Naive thymus-derived CD4-positive, alpha-beta T cell (primary cell): ENCODE measurements at regions of chr16 and their contacts with region 1.

Region 1: DNA sequence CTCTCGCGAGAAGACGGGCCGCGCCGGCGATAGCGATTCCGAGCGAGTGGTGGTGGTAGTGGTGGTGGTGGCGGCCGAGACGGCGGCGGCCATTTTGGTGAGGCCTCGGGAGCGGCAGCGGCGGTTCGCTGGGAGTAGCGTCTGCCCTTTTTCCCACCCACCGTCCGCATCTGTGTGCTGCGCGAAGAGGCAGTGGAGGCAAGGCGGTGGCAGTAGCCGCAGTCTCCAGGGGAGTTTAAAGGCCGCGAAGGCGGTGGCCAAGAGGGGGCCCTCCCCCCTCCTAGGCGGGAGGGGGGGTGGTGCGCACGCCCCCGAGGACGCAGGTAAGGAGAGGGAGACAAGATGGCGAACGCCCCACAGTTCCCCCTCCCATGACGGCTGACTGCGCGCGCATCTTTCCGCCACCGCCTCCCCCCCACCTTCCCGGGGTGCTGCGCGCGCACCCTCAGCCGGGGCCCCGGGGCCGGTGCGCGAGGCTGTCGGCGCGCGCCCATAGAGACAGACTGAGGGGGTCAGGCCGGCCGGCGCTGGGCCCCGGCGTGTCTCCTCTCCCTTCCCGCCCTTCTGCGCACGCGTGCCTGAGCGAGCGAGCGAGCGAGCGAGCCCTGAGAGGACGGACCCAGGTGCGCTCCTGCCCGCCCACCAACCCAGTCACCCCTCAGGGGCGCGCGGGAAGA is 694 bp upstream of the SRCAP start:
- DNase-seq: peak; percentile 98 to 100 (median 99)
- ATAC-seq: peak; percentile 86
- H3K4me3 ChIP-seq: peak overlapping the region; percentile 86
- H3K4me3 Mint-ChIP-seq: peak overlapping the region; percentile 87 to 99 (median 97)
- H3K27ac ChIP-seq: peak overlapping the region; percentile 99
- H3K27ac Mint-ChIP-seq: peak overlapping the region; percentile 99 to 100 (median 100)
- H3K4me1 ChIP-seq: peaks cover 15 to 35% of the 10 kb centered on the region in 2 donors
- H3K4me1 Mint-ChIP-seq: peaks cover 26 to 48% (median 41%) of the 10 kb centered on the region in 7 donors
- H3K27me3 ChIP-seq: no peaks in the 10 kb centered on the region
- H3K27me3 Mint-ChIP-seq: no peaks in the 10 kb centered on the region

Region 2: GRCh38 chr16:30091474-30092372 is 606.6 kb before region 1 on chr16 and contains the start of gene TBX6:
- CTCF ChIA-PET with region 1: no interaction called
- POLR2A ChIA-PET with region 1: no interaction called
- intact Hi-C with region 1: loop called in 1 of 2 experiments (anchors 10 kb)
- DNase-seq: peak; percentile 85 to 96 (median 91)
- ATAC-seq: peak; percentile 87
- H3K4me3 ChIP-seq: peak within 1 kb of the TSS; percentile 60
- H3K4me3 Mint-ChIP-seq: peak within 1 kb of the TSS; percentile 87 to 96 (median 93)
- H3K27ac ChIP-seq: peak within 1 kb of the TSS; percentile 77
- H3K27ac Mint-ChIP-seq: peak within 1 kb of the TSS; percentile 92 to 97 (median 95)
- H3K4me1 ChIP-seq: peaks cover 32 to 47% of the 10 kb centered on the region in 2 donors
- H3K4me1 Mint-ChIP-seq: peaks cover 43 to 65% (median 50%) of the 10 kb centered on the region in 7 donors
- H3K27me3 ChIP-seq: no peaks in the 10 kb centered on the region
- H3K27me3 Mint-ChIP-seq: no peaks in the 10 kb centered on the region
- total RNA-seq, gene TBX6: 1.5 to 3.3 (median 1.6) TPM

Region 3: GRCh38 chr16:30429678-30430427 is 268.4 kb before region 1 on chr16 and contains the start of gene DCTPP1:
- CTCF ChIA-PET with region 1: interaction called, 4 read pairs
- POLR2A ChIA-PET with region 1: no interaction called
- intact Hi-C with region 1: loop called in 1 of 2 experiments (anchors 1 kb)
- DNase-seq: peak; percentile 79 to 99 (median 97)
- ATAC-seq: peak; percentile 98
- H3K4me3 ChIP-seq: peak within 1 kb of the TSS; percentile 67
- H3K4me3 Mint-ChIP-seq: no peak within 1 kb of the TSS
- H3K27ac ChIP-seq: peak within 1 kb of the TSS; percentile 85
- H3K27ac Mint-ChIP-seq: peak within 1 kb of the TSS in 1 of 9 donors; percentile 38
- H3K4me1 ChIP-seq: peaks cover 16 to 19% of the 10 kb centered on the region in 2 donors
- H3K4me1 Mint-ChIP-seq: peaks cover 14 to 29% (median 21%) of the 10 kb centered on the region in 7 donors
- H3K27me3 ChIP-seq: no peaks in the 10 kb centered on the region
- H3K27me3 Mint-ChIP-seq: no peaks in the 10 kb centered on the region
- total RNA-seq, gene DCTPP1: 11.6 to 74.1 (median 13.8) TPM

Region 4: DNA sequence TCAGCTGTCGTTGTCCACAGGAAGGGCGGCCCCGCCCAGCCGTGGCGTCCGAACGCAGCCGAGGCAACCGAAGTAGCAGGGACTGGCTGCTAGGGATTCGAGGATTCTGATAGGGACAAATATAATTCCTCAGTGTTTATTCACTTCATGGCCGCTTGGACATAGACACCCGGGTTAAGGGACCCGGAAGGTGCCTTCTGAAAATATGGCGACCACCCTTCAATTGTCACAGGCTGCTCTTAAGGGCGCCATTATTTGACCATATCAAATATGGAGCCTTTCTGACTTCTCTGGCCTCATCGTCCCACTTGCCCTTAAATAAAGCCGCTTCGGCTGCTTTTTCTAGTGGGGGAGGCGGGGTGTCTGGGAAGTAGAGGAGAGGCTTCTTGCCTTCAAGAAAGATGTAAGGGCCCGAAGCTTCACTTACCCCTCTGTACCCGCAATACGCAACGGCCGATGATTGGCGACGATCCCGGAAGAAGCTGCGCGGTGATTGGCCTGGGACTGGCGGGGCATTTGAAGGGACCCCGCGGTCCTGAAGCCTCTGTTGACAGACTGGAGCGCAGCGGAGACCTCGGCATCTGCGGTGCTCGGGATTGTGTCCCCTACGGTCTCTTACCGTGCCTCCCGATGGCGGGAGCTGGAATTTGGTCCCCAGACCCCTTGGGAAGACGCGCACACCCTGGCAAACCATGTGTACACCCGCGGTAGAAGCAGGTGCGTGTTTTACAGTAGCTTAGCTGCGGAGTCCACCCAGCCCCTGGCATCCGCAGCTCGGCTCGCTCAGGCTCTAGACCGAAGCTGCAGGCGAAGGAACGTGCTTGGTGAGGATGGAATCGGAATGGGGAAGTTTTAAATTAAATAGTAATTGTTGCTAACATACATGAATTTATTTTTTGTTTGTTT is 126.3 kb before region 1 on chr16 and contains the start of gene ZNF688:
- CTCF ChIA-PET with region 1: no interaction called
- POLR2A ChIA-PET with region 1: interaction called, 12 read pairs
- intact Hi-C with region 1: loop called (anchors 1 kb)
- DNase-seq: peak; percentile 74 to 99 (median 97)
- ATAC-seq: peak; percentile 89
- H3K4me3 ChIP-seq: peak within 1 kb of the TSS; percentile 88
- H3K4me3 Mint-ChIP-seq: peak within 1 kb of the TSS; percentile 87 to 98 (median 90)
- H3K27ac ChIP-seq: peak within 1 kb of the TSS; percentile 94
- H3K27ac Mint-ChIP-seq: peak within 1 kb of the TSS; percentile 92 to 98 (median 95)
- H3K4me1 ChIP-seq: peaks cover 36 to 38% of the 10 kb centered on the region in 2 donors
- H3K4me1 Mint-ChIP-seq: peaks cover 17 to 51% (median 39%) of the 10 kb centered on the region in 7 donors
- H3K27me3 ChIP-seq: no peaks in the 10 kb centered on the region
- H3K27me3 Mint-ChIP-seq: no peaks in the 10 kb centered on the region
- total RNA-seq, gene ZNF688: 8.8 to 24.3 (median 16.3) TPM

Region 5: DNA sequence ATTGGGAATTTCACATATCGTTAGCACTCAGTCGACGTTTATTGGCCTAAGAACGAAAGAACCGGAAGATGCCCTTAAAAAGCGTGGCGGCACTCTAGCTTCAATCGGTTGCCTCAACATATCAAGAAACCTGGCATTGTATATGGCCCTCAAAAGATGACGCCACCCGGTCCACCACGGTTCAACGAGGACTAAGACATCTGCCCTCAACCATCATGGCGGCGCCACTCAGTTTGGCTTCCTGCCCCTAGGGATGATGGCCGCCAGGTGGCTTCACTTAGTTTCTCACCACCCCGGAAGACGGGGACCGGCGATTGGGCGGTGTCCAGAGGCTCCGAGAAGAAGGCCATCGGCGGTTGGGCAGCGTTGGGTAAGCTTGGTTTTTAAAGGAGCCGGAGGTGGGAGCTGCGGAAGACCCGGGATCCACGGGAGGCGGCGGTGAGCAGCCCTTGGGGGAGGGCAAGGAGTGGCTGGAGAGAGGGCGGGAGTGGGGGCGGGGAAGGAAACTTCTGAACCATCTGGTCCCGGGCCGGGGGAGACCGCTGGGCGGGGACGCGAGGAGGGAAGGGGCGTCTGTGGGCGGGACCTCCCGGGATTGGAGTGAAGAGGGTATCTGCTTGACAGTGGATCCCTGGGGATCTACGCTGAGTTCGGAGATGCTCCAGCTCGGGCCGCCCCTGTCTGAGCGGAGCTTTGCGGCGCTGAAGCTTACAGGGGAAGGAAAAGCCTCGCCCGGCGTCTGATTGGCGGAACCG is 47.7 kb before region 1 on chr16 and contains the start of gene PRR14:
- CTCF ChIA-PET with region 1: interaction called, 25 read pairs
- POLR2A ChIA-PET with region 1: interaction called, 13 read pairs
- intact Hi-C with region 1: loop called (anchors 1 kb)
- DNase-seq: peak; percentile 87 to 99 (median 96)
- ATAC-seq: peak; percentile 93
- H3K4me3 ChIP-seq: peak within 1 kb of the TSS; percentile 100
- H3K4me3 Mint-ChIP-seq: peak within 1 kb of the TSS; percentile 86 to 100 (median 98)
- H3K27ac ChIP-seq: peak within 1 kb of the TSS; percentile 90
- H3K27ac Mint-ChIP-seq: peak within 1 kb of the TSS; percentile 95 to 99 (median 98)
- H3K4me1 ChIP-seq: peaks cover 9 to 10% of the 10 kb centered on the region in 2 donors
- H3K4me1 Mint-ChIP-seq: peaks cover 19 to 39% (median 22%) of the 10 kb centered on the region in 7 donors
- H3K27me3 ChIP-seq: no peaks in the 10 kb centered on the region
- H3K27me3 Mint-ChIP-seq: peaks cover 0 to 3% (median 0%) of the 10 kb centered on the region in 5 donors
- total RNA-seq, gene PRR14: 57.6 to 91.9 (median 82.5) TPM

Region 6: GRCh38 chr16:30893744-30894539 is 195.7 kb after region 1 on chr16 and contains the start of gene BCL7C:
- CTCF ChIA-PET with region 1: no interaction called
- POLR2A ChIA-PET with region 1: no interaction called
- intact Hi-C with region 1: loop called in 1 of 2 experiments (anchors 1 kb)
- DNase-seq: peak; percentile 48 to 96 (median 61)
- ATAC-seq: peak; percentile 85
- H3K4me3 ChIP-seq: peak within 1 kb of the TSS; percentile 82
- H3K4me3 Mint-ChIP-seq: peak within 1 kb of the TSS; percentile 84 to 96 (median 90)
- H3K27ac ChIP-seq: peak within 1 kb of the TSS; percentile 82
- H3K27ac Mint-ChIP-seq: peak within 1 kb of the TSS; percentile 80 to 94 (median 91)
- H3K4me1 ChIP-seq: peaks cover 25 to 34% of the 10 kb centered on the region in 2 donors
- H3K4me1 Mint-ChIP-seq: peaks cover 26 to 60% (median 48%) of the 10 kb centered on the region in 7 donors
- H3K27me3 ChIP-seq: no peaks in the 10 kb centered on the region
- H3K27me3 Mint-ChIP-seq: no peaks in the 10 kb centered on the region
- total RNA-seq, gene BCL7C: 17.2 to 23.7 (median 22.7) TPM

Region 7: DNA sequence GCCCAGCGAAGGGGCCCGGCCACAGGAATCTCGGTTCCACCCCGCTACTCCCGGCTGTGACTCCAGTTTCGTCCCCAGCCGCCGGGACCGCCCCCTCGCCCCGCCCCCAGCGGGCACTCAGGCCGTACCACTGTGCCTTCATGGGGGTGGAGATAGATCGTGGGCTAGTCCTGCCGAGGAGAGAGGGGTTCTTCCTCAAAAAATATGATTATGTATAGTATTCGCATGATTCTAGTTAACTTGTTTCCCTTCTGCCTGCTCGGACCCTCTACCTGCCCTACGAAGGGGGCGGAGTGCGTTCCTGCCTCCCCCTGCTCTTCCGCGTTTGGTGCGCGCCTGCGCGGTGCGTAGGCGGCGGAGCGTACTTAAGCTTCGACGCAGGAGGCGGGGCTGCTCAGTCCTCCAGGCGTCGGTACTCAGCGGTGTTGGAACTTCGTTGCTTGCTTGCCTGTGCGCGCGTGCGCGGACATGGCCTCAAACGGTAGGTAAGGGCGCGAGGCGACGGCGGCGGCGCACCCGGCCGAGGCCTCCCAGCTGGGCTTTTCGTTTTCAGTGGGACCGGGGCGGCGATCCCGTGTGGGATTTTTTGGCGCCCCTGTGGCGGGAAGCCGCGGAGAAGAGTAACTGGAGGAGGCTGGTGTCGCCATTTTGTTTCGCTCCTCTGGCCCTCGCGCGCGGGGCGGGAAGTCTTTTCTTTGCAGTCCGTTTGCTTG is 481.6 kb after region 1 on chr16 and contains the start of gene FUS:
- CTCF ChIA-PET with region 1: interaction called, 3 read pairs
- POLR2A ChIA-PET with region 1: interaction called, 4 read pairs
- intact Hi-C with region 1: loop called in 1 of 2 experiments (anchors 2 kb)
- DNase-seq: peak; percentile 88 to 97 (median 95)
- ATAC-seq: peak; percentile 87
- H3K4me3 ChIP-seq: peak within 1 kb of the TSS; percentile 76
- H3K4me3 Mint-ChIP-seq: peak within 1 kb of the TSS; percentile 92 to 99 (median 96)
- H3K27ac ChIP-seq: peak within 1 kb of the TSS; percentile 90
- H3K27ac Mint-ChIP-seq: peak within 1 kb of the TSS; percentile 96 to 100 (median 99)
- H3K4me1 ChIP-seq: peaks cover 56% of the 10 kb centered on the region in 2 donors
- H3K4me1 Mint-ChIP-seq: peaks cover 49 to 72% (median 56%) of the 10 kb centered on the region in 7 donors
- H3K27me3 ChIP-seq: no peaks in the 10 kb centered on the region
- H3K27me3 Mint-ChIP-seq: peaks cover 0 to 3% (median 0%) of the 10 kb centered on the region in 5 donors
- total RNA-seq, gene FUS: 597 to 956 (median 714) TPM